ENCODE measurements at regions of chr21 and their contacts with region 1.

Region 1: GRCh38 chr21:34582506-34583150 is 32.3 kb downstream of the RCAN1 start:
- DNase-seq: peak; percentile 19
- H3K4me3 Mint-ChIP-seq: no peak overlapping the region
- H3K27ac Mint-ChIP-seq: no peak overlapping the region
- H3K4me1 Mint-ChIP-seq: peaks cover 12% of the 10 kb centered on the region
- H3K27me3 Mint-ChIP-seq: no peaks in the 10 kb centered on the region

Region 2: DNA sequence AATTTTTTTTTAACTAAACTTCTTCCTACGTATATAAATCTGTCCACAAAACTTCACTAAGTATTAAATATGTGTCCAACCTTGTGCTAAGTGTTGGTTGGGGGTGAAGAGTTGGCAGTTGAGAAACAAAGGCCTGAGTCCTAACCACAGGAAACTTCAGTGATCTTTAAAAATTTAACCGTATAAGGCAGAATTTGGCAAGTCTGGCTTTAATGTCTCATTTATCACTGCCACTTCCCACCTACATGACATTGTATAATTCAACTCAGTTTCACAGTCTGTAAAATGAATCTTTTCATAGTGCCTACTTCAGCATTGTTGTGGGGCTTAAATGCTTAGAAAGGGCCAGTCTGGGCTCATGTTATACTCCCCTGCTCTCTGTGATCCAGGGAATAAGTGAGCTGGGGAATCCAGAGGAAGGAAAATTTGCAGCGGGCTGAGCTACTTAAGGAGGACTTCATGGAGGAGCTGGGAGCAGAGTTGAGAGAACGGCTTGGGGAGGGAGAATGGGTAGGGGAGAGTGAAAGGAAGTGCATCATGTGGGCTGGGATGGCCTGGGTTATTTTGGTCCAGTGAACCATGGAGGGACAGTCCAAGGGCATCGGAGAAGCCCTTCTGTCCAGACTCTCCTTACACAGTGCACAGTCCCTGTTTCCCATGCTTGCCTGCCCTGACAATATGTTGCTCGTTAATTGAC is 1338.4 kb before region 1 on chr21:
- CTCF ChIA-PET with region 1: no interaction called
- POLR2A ChIA-PET with region 1: no interaction called
- intact Hi-C with region 1: no loop called
- DNase-seq: no peak
- H3K4me3 Mint-ChIP-seq: peak overlapping the region; percentile 34
- H3K27ac Mint-ChIP-seq: peak overlapping the region; percentile 89
- H3K4me1 Mint-ChIP-seq: peaks cover 82% of the 10 kb centered on the region
- H3K27me3 Mint-ChIP-seq: no peaks in the 10 kb centered on the region

Region 3: GRCh38 chr21:34510148-34511142 is 72.2 kb before region 1 on chr21:
- CTCF ChIA-PET with region 1: interaction called, 6 read pairs
- POLR2A ChIA-PET with region 1: interaction called, 3 read pairs
- intact Hi-C with region 1: loop called (anchors 2 kb)
- DNase-seq: peak; percentile 73
- H3K4me3 Mint-ChIP-seq: no peak overlapping the region
- H3K27ac Mint-ChIP-seq: no peak overlapping the region
- H3K4me1 Mint-ChIP-seq: no peaks in the 10 kb centered on the region
- H3K27me3 Mint-ChIP-seq: no peaks in the 10 kb centered on the region

Region 4: GRCh38 chr21:34526618-34527290 is 55.9 kb before region 1 on chr21:
- CTCF ChIA-PET with region 1: interaction called, 3 read pairs
- POLR2A ChIA-PET with region 1: no interaction called
- intact Hi-C with region 1: loop called (anchors 5 kb)
- DNase-seq: peak; percentile 66
- H3K4me3 Mint-ChIP-seq: peak overlapping the region; percentile 59
- H3K27ac Mint-ChIP-seq: peak overlapping the region; percentile 76
- H3K4me1 Mint-ChIP-seq: peaks cover 22% of the 10 kb centered on the region
- H3K27me3 Mint-ChIP-seq: no peaks in the 10 kb centered on the region

Region 5: GRCh38 chr21:34545079-34545884 is 37.3 kb before region 1 on chr21:
- CTCF ChIA-PET with region 1: interaction called, 4 read pairs
- POLR2A ChIA-PET with region 1: no interaction called
- intact Hi-C with region 1: loop called (anchors 5 kb)
- DNase-seq: peak; percentile 40
- H3K4me3 Mint-ChIP-seq: no peak overlapping the region
- H3K27ac Mint-ChIP-seq: peak overlapping the region; percentile 67
- H3K4me1 Mint-ChIP-seq: peaks cover 15% of the 10 kb centered on the region
- H3K27me3 Mint-ChIP-seq: no peaks in the 10 kb centered on the region

Measured in activated CD4-positive, alpha-beta memory T cell treated with anti-CD3 and anti-CD28 coated beads for 36 hours (primary cell).